Endothelial cell of umbilical vein (primary cell): ENCODE measurements at regions of chr12 and their contacts with region 1.

Region 1: DNA sequence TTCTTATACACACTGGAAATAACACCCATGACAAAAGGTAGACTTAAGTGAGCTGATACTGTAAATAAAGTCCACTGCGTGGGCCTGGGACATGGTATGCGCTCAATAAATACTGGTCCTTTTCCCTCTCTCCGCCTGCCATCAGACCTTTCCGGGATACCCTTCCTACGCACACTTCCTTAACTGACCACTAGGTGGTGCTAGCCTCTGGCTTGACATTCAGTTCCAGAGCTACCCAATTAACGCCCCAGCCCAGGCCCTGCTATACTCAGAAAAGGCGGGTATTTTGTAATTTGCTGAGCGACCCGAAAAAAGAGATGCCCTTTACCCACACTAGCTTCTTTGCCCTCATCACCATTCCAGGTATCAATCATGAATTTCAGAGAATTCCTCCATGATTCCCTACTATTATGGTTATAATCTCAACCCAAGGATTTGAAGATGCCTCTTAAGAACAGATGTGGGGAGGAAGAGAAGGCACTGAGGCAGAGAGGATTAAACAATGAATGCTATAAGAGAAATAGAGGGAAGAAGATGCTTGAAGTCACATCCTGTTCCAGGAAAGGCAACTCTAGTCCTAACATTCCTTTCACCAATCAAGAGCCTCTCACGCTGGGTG is 3.9 kb upstream of the LRP1 start:
- DNase-seq: peak; percentile 65
- H3K4me3 ChIP-seq: no peak overlapping the region
- H3K27ac ChIP-seq: no peak overlapping the region
- H3K4me1 ChIP-seq: peaks cover 4% of the 10 kb centered on the region
- H3K27me3 ChIP-seq: peaks cover 17 to 32% of the 10 kb centered on the region in 2 experiments
- CTCF ChIP-seq: peak; percentile 90 to 93
- POLR2A ChIP-seq: no peak

Region 2: DNA sequence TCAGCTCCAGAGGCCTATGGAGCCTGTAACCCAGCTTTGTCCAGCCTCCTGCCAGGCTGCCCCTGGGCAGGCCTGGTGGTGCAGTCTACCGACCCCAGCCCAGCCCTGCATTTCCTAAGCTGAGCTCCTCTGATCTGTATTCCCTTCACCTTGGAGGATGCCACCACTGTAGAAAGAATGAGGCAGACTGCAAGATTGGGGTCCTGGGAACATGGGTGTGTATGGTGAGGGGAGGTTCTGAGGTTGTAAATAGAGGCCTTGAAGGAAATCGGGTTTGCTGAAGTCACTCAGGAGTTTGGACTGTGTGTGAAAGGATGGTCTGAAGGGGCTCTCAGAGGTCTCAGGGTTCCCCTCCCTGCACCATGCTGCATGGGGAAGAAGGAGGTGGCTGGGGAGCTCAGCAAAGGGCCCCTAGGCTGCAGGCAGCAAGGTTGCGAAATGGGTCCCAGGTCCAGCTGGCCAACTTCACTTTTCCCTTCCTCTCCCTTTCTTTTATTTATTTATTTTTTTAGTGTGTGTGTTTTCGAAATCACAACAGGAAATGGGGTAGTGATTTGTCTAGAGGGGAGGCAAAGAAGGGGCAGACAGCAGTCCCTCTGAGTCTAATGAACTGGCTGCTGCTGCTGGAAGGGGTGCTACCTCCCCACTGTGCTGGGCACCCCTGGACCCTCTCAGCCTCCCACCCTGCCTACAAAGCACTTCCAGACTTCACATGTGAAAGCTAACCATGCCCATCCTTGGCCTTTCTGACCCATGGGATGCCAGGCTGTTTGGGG is 24.3 kb after region 1 on chr12:
- CTCF ChIA-PET with region 1: interaction called, 10 read pairs
- POLR2A ChIA-PET with region 1: interaction called, 8 read pairs
- dilution Hi-C with region 1: no loop called
- intact Hi-C with region 1: loop called (anchors 2 kb)
- DNase-seq: no peak
- H3K4me3 ChIP-seq: no peak overlapping the region
- H3K27ac ChIP-seq: no peak overlapping the region
- H3K4me1 ChIP-seq: peaks cover 2% of the 10 kb centered on the region
- H3K27me3 ChIP-seq: no peaks in the 10 kb centered on the region
- CTCF ChIP-seq: no peak
- POLR2A ChIP-seq: no peak

Region 3: GRCh38 chr12:57175428-57176138 is 51.2 kb after region 1 on chr12:
- CTCF ChIA-PET with region 1: interaction called, 429 read pairs
- POLR2A ChIA-PET with region 1: no interaction called
- dilution Hi-C with region 1: loop called (anchors 5 kb)
- intact Hi-C with region 1: loop called (anchors 1 kb)
- DNase-seq: peak; percentile 24
- H3K4me3 ChIP-seq: no peak overlapping the region
- H3K27ac ChIP-seq: no peak overlapping the region
- H3K4me1 ChIP-seq: no peaks in the 10 kb centered on the region
- H3K27me3 ChIP-seq: no peaks in the 10 kb centered on the region
- CTCF ChIP-seq: peak; percentile 68 to 76
- POLR2A ChIP-seq: no peak

Region 4: GRCh38 chr12:57182921-57183790 is 58.8 kb after region 1 on chr12:
- CTCF ChIA-PET with region 1: interaction called, 164 read pairs
- POLR2A ChIA-PET with region 1: no interaction called
- dilution Hi-C with region 1: no loop called
- intact Hi-C with region 1: loop called (anchors 1 kb)
- DNase-seq: peak; percentile 50
- H3K4me3 ChIP-seq: no peak overlapping the region
- H3K27ac ChIP-seq: no peak overlapping the region
- H3K4me1 ChIP-seq: no peaks in the 10 kb centered on the region
- H3K27me3 ChIP-seq: peaks cover 2 to 5% of the 10 kb centered on the region in 2 experiments
- CTCF ChIP-seq: peak; percentile 92 to 94
- POLR2A ChIP-seq: no peak

Region 5: DNA sequence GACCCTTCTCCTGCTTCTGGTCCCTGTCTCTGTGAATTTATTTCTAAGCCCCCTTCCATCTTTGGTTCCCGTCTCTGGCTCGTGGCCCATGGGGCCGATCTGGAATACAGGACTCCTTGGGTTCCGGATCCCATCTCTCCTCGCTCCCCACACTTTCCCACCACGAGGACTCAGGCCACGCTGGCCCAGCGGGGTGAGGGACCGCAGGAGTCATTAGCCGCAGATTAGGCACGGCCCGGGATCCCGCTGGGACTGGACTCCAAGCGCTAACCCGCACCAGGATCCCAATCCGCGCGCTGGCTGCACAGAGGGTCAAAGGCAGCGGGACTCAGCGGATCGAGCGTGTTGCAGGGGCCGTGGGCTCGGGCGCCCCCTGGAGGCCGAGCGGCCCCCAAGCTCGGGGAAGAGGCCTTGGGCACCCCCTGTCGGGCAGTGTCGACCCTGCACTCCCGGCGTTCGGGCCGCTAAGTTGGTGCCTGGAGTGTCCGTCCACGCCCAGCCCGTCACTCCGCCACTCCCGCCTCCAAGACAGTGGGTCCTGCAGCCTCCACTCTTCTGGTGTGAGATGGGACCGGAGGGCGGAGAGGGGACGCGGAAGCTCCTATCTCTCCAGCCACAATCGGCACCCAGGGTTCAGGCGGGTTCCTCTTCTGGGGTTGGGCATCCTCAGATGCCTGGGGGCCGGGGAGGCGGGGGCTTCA is 114.6 kb after region 1 on chr12:
- CTCF ChIA-PET with region 1: interaction called, 5 read pairs
- POLR2A ChIA-PET with region 1: no interaction called
- dilution Hi-C with region 1: no loop called
- intact Hi-C with region 1: loop called (anchors 5 kb)
- DNase-seq: peak; percentile 86
- H3K4me3 ChIP-seq: peak overlapping the region in 2 of 3 experiments; percentile 3 to 35
- H3K27ac ChIP-seq: no peak overlapping the region
- H3K4me1 ChIP-seq: peaks cover 28% of the 10 kb centered on the region
- H3K27me3 ChIP-seq: peaks cover 55 to 58% of the 10 kb centered on the region in 2 experiments
- CTCF ChIP-seq: peak; percentile 100
- POLR2A ChIP-seq: no peak